Breast epithelium (tissue), 4 donors: ENCODE measurements at regions of chr13 and their contacts with region 1.

Region 1: DNA sequence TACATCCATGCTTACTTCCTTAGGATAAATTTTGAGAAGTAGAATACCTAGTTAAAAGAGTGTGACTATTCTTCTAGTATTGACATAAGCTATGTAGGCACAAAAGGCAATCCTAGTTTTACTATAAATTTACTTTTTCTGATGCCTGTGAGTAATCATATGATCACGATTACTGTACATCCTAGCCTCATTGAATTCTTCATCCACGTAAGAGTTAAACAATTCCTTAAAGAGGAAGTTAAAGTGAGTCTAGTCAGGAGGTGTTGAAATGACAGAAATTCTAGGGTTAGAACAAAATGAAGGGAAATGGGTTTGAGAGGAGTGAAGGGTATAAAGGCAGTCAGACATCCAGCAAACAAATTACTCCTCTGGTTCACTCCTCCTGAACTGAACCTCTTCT is at the start of gene ACOD1:
- DNase-seq: no peak
- H3K4me3 ChIP-seq: no peak within 1 kb of the TSS
- H3K27ac ChIP-seq: no peak within 1 kb of the TSS
- H3K4me1 ChIP-seq: no peaks in the 10 kb centered on the region
- H3K27me3 ChIP-seq: no peaks in the 10 kb centered on the region
- CTCF ChIP-seq: no peak
- POLR2A ChIP-seq: no peak
- total RNA-seq, gene ACOD1: not detected

Region 2: GRCh38 chr13:77026818-77027585 is 78.9 kb after region 1 on chr13 and contains the start of gene FBXL3:
- intact Hi-C with region 1: loop called (anchors 2 kb)
- DNase-seq: peak; percentile 79 to 81
- H3K4me3 ChIP-seq: peak within 1 kb of the TSS; percentile 92 to 100 (median 97)
- H3K27ac ChIP-seq: peak within 1 kb of the TSS; percentile 99
- H3K4me1 ChIP-seq: peaks cover 0 to 6% of the 10 kb centered on the region in 2 donors
- H3K27me3 ChIP-seq: no peaks in the 10 kb centered on the region
- CTCF ChIP-seq: no peak
- POLR2A ChIP-seq: no peak
- total RNA-seq, gene FBXL3: 110 to 129 (median 128) TPM

Region 3: DNA sequence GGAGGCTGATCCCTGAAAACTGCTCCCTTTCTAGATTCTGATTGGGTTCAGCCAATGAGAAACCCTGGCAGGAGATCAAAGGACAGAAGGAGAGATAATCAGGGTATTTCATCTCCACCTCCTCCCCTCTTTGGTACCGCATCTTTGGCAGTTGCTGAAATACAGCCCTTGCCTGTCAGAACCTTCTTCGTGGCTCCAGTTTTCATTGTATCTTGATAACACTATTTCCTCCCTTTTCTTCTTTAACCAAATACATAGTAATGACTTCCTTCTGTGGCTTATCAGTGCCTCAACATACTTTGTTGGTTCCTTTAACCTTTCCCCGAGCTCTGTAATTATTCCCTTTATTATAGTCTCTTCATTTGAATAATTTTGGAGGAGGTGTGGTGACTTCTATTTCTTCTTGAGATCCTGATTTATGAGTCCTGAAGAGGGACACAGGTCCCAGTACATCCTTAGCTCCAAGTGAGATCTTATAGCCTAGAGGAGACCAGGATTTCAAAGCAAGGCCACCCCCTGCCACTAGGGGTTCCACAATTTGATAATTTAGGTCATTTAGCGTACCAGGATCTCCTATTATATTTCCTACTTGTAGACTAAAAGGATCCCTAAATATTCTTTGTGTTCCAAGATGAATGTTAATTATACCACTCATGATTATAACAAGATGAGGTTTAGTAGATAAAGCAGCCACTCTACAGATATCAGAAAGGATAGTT is 872.4 kb after region 1 on chr13:
- intact Hi-C with region 1: no loop called
- DNase-seq: no peak
- H3K4me3 ChIP-seq: no peak overlapping the region
- H3K27ac ChIP-seq: no peak overlapping the region
- H3K4me1 ChIP-seq: no peaks in the 10 kb centered on the region
- H3K27me3 ChIP-seq: no peaks in the 10 kb centered on the region
- CTCF ChIP-seq: no peak
- POLR2A ChIP-seq: no peak